ENCODE measurements at regions of chr19 and their contacts with region 1.

Region 1: DNA sequence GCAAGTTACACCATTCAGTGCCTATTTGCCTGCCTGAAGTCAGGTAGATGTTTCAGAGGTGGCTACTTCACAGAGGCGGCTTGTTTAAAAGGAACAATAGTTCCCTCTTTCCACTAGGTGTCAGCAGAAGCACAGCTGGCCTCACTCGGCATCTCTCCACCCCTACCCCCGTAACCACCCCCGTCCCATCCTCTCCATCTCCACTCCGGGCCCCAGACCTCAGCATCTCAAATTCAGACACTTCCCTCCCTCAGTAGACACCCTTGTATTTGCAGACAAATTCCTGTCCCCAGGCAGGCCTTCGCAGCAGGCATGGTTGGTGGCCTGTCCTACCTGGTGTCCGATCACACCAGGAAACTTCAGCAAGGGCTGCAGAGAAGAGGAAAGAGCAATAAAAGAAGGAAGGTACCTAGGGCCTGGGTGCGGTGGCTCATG is 9.1 kb upstream of the DPP9 start:
- DNase-seq: peak; percentile 43
- H3K4me3 Mint-ChIP-seq: no peak overlapping the region
- H3K27ac Mint-ChIP-seq: no peak overlapping the region
- H3K4me1 Mint-ChIP-seq: peaks cover 9% of the 10 kb centered on the region
- H3K27me3 Mint-ChIP-seq: peaks cover 30% of the 10 kb centered on the region
- CTCF ChIP-seq: peak; percentile 50

Region 2: DNA sequence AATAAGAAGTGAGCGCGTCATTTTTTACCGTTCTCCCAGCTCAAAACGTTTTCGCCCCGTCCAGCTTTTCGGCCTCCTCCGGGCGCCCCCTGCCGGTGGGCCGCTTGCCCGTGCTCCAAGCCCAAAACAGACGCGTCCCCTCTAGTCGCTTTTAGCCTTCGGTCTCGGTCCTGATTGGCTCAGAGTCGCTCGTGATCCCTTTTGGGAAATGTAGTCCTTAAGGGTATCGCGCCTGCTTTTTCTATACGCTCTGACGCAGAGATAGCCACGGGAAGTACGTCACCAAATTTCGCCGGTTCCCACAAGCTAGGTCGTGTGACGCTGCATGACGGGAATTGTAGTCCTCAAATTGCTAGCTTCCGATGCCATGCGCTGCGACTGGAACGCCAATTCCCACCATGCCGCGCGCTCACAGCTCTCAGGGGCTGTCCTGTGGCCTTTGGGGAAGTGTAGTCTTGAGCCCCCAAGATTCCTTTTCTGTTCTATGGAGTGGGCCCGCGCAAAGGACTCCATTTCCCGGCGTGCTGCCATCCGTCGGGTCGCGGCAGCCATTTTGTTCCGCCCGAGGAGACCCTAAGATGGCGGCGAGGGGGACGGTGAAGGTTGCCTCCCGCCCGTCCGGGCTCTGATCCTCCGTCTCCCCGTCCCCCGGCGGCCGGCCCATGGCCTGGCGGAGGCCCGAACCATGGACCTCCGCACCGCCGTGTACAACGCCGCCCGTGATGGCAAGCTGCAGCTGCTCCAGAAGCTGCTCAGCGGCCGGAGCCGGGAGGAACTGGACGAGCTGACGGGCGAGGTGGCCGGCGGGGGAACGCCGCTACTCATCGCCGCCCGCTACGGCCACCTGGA is 58.7 kb after region 1 on chr19 and contains the start of gene FEM1A:
- CTCF ChIA-PET with region 1: interaction called, 32 read pairs
- intact Hi-C with region 1: loop called (anchors 1 kb)
- DNase-seq: peak; percentile 95
- H3K4me3 Mint-ChIP-seq: peak within 1 kb of the TSS; percentile 77
- H3K27ac Mint-ChIP-seq: peak within 1 kb of the TSS; percentile 76
- H3K4me1 Mint-ChIP-seq: no peaks in the 10 kb centered on the region
- H3K27me3 Mint-ChIP-seq: peaks cover 1% of the 10 kb centered on the region
- CTCF ChIP-seq: peak; percentile 82
- total RNA-seq, gene FEM1A: 8.8 and 10.2 TPM in 2 replicates

Measured in Calu3 (cell line).